AG04449 (cell line): ENCODE measurements at regions of chr4 and their contacts with region 1.

Region 1: DNA sequence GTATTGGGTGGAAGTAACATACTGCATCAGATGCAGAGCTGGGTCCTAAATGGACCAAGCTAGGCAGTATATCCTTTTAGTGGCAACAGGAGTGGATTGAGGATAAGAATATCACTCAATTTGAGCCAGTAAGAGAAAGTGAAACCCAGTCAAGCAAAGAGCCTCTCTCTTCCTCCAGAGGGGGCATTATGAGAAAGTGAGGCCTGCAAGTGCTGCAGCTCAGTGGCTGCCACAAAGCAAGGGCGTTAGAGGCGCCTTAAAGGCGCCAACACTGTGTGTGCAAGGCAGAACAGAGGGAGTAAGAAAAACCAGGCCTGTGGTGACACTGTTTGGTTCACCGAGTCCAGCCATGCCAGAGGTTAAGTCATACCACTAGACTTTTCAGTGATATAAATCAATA is 17.5 kb downstream of the STX18 start:
- DNase-seq: no peak
- H3K4me3 ChIP-seq: no peak overlapping the region
- CTCF ChIP-seq: peak; percentile 3

Region 2: DNA sequence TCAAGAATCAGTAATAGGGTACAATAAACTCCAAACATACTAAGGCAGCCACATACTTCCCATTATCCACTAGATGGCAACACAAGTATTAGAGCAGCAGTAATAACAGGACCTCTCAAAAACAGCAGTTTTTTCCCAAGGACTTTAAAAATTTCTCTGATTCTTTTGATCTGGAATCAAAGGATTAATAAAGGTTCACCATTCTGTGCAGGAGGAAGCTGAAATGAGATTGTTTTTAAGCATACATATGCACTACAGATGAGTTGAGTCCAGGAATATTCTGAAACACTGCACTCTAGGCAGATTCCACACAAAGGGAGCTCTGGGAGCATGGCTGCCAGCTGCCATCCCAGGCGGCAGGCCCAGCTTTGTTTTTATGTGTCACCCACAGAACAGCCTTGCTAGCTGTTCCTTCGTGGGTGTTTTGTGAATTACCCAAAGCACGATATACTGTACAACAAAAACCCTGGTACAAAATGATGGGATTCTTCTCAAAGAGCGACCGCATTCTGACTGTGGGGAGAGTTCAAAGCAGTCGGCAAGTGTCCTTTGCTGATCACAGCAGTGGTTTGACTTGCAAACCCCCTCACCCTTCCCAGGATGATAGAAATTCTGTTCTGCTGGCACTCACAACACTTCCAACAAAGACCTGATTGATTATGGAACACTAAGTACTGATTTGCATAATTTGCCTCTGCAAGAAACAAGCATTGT is 43.5 kb before region 1 on chr4:
- CTCF ChIA-PET with region 1: interaction called, 12 read pairs
- POLR2A ChIA-PET with region 1: no interaction called
- DNase-seq: no peak
- H3K4me3 ChIP-seq: no peak overlapping the region
- CTCF ChIP-seq: peak; percentile 43

Region 3: DNA sequence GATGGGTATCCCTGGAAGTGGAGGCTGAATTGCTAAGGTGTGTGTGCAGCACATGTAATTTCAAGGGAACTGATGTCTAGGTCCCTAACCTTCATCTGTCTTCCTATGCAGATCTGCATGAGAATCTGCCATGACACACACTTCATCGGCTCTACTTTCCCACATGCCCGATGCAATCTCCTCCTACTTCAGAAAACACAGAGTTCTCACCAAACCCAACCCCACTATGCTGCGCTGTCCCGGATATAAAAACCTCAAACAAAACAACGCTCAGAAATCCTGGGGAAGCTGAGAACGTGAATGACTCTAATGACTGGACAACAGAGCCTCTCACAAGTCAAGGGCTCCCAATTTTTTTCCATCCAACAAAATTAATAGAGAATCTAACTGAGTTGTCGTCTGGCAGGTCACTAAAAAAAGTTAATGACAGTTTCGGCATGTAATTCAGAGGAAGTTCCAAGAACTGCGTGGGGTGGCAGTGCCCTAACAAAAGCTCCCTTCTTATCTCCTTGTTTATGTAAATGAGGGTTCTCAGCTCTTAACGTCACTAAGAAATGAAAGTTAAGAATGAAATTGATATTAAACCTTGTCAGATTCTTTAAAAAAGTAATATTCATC is 21.6 kb before region 1 on chr4:
- CTCF ChIA-PET with region 1: interaction called, 33 read pairs
- POLR2A ChIA-PET with region 1: no interaction called
- DNase-seq: no peak
- H3K4me3 ChIP-seq: no peak overlapping the region
- CTCF ChIP-seq: no peak

Region 4: GRCh38 chr4:4507923-4508322 is 16.4 kb before region 1 on chr4:
- CTCF ChIA-PET with region 1: interaction called, 33 read pairs
- POLR2A ChIA-PET with region 1: no interaction called
- DNase-seq: no peak
- H3K4me3 ChIP-seq: no peak overlapping the region
- CTCF ChIP-seq: no peak

Region 5: DNA sequence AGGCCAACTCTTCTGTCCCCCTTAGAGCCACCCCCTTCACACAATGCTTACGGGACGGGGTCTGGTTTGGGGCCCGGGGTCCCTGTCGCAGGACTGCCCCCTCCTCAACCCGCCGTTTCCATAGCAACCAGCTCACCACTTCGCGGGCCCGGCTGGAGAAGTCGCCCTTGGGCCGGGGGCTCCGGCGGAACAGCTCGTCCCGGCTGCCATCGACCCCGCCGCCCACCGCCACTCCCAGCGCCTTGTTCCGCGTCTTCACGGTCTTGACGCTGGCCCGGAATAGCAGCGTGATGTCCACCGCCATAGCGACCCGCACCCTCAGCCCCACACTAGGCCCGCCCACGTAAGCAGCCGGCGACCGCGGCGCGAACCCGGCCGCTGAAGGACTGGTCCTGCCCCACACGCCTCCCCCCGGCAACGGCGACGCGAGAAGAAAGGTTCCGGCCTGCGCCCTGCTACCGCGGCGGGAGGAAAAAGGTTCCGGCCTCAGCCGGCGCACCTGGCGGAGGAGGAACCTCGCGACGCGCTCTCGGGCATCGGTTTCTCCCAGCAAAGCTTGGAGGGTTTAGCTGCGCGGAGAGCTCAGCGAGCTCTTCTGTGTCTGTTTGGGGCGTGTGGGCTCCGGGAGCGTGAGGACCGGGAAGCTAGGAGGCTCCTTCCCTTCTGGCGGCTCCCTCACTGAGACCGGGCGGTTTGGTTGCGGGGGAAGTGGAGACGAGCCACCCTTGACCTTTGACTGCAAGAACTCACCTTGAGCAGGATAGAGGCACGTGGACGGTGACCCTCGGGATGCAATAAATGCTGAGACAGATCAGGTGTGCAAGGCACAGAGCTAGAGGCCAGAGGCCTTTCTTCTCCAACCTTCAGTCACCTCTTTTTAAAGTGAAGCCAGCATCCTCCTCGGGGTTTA is 17.6 kb after region 1 on chr4 and contains the start of gene STX18:
- CTCF ChIA-PET with region 1: interaction called, 18 read pairs
- POLR2A ChIA-PET with region 1: no interaction called
- DNase-seq: peak; percentile 24
- H3K4me3 ChIP-seq: peak within 1 kb of the TSS; percentile 84
- CTCF ChIP-seq: no peak

Region 6: DNA sequence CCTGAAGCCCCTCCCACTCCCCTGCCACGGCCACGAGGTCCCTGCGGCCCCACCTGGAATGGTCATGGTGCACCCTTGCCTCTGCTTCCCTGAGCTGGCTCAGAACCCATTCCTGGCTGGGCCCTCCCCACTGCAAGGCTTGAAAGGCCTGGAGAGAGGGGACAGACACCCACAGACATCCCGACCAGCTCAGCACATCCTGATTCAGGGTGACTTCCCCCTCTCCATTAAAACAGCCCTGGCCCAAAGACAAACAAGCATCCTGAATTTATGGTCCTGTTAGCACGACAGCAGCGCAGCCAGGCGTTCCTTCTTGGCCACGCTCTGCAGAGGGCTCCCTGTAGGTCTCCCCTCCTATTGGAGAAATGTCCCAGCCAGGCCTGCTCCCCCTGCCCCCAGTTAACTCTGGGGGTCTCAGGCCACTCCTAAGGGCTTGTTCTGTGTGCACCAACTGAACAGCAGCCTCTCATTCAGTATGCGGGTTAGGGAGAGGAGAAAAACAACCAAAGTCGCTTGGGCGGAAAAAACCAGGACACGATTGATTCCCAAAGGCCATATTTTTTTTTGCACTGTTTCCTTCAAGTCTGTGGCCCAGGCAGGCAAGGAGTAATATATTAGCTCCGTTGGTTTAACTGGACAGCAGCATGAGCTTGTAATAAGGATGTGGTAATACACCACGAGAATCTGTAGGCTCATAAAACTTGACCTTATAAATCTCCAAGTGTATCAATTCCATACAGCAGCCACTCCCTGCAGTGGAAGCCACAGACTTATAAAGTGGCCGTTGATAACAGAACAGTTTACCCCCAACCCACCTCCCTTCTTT is 228.4 kb after region 1 on chr4:
- CTCF ChIA-PET with region 1: no interaction called
- POLR2A ChIA-PET with region 1: no interaction called
- DNase-seq: no peak
- H3K4me3 ChIP-seq: no peak overlapping the region
- CTCF ChIP-seq: no peak

Region 7: GRCh38 chr4:5014007-5014682 is 489.8 kb after region 1 on chr4:
- CTCF ChIA-PET with region 1: no interaction called
- POLR2A ChIA-PET with region 1: no interaction called
- DNase-seq: no peak
- H3K4me3 ChIP-seq: no peak overlapping the region
- CTCF ChIP-seq: no peak